ENCODE measurements at regions of chr20 and their contacts with region 1.

Region 1: GRCh38 chr20:32773855-32774254 is 11.7 kb downstream of the DNMT3B start:
- DNase-seq: no peak
- H3K4me3 ChIP-seq: no peak overlapping the region
- H3K4me3 Mint-ChIP-seq: no peak overlapping the region
- H3K27ac Mint-ChIP-seq: no peak overlapping the region
- H3K4me1 ChIP-seq: peaks cover 31% of the 10 kb centered on the region
- H3K4me1 Mint-ChIP-seq: peaks cover 39% of the 10 kb centered on the region
- H3K27me3 ChIP-seq: no peaks in the 10 kb centered on the region
- H3K27me3 Mint-ChIP-seq: no peaks in the 10 kb centered on the region
- CTCF ChIP-seq: no peak

Region 2: GRCh38 chr20:32737371-32738223 is 36.3 kb before region 1 on chr20:
- CTCF ChIA-PET with region 1: interaction called, 42 read pairs
- POLR2A ChIA-PET with region 1: interaction called, 10 read pairs
- intact Hi-C with region 1: no loop called
- DNase-seq: no peak
- H3K4me3 ChIP-seq: no peak overlapping the region
- H3K4me3 Mint-ChIP-seq: no peak overlapping the region
- H3K27ac Mint-ChIP-seq: no peak overlapping the region
- H3K4me1 ChIP-seq: peaks cover 19% of the 10 kb centered on the region
- H3K4me1 Mint-ChIP-seq: peaks cover 22% of the 10 kb centered on the region
- H3K27me3 ChIP-seq: no peaks in the 10 kb centered on the region
- H3K27me3 Mint-ChIP-seq: no peaks in the 10 kb centered on the region
- CTCF ChIP-seq: no peak

Region 3: GRCh38 chr20:32934580-32934979 is 160.7 kb after region 1 on chr20:
- CTCF ChIA-PET with region 1: no interaction called
- POLR2A ChIA-PET with region 1: no interaction called
- intact Hi-C with region 1: no loop called
- DNase-seq: no peak
- H3K4me3 ChIP-seq: no peak overlapping the region
- H3K4me3 Mint-ChIP-seq: no peak overlapping the region
- H3K27ac Mint-ChIP-seq: no peak overlapping the region
- H3K4me1 ChIP-seq: no peaks in the 10 kb centered on the region
- H3K4me1 Mint-ChIP-seq: no peaks in the 10 kb centered on the region
- H3K27me3 ChIP-seq: no peaks in the 10 kb centered on the region; the same call in 1 of the 2 replicates
- H3K27me3 Mint-ChIP-seq: peaks cover 15% of the 10 kb centered on the region
- CTCF ChIP-seq: no peak